Heart left ventricle (tissue), 16 donors: ENCODE measurements at regions of chr4 and their contacts with region 1.

Region 1: DNA sequence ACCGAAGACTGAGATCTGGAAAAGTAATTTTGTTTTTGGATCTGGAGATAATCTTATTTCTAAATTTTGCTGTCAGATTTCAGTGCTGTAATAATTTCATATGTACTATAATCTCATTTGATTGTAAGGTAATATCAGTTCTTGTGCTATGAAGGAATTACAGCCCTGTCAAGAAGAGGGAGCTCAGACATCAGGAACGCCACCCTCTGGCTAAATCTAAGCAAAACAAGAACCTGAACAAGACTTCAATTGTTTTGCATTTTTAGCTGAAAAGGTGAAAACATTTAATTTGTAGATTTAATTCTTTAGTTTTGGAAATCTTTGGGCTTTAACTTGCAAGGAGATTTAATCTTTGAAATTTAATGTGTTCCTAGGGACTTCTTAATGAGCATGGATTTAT is 525.4 kb upstream of the HS3ST1 start:
- DNase-seq: no peak
- ATAC-seq: no peak
- H3K4me3 ChIP-seq: no peak overlapping the region
- H3K27ac ChIP-seq: no peak overlapping the region
- H3K4me1 ChIP-seq: no peaks in the 10 kb centered on the region
- H3K27me3 ChIP-seq: no peaks in the 10 kb centered on the region
- CTCF ChIP-seq: peak in 10 of 12 donors; percentile 23 to 61 (median 46)
- POLR2A ChIP-seq: no peak

Region 2: GRCh38 chr4:11805842-11806241 is 148.3 kb before region 1 on chr4:
- intact Hi-C with region 1: loop called in 7 of 10 experiments (anchors 5 to 10 kb)
- DNase-seq: no peak
- ATAC-seq: peak; percentile 55 to 83 (median 80)
- H3K4me3 ChIP-seq: no peak overlapping the region
- H3K27ac ChIP-seq: no peak overlapping the region
- H3K4me1 ChIP-seq: no peaks in the 10 kb centered on the region
- H3K27me3 ChIP-seq: no peaks in the 10 kb centered on the region
- CTCF ChIP-seq: peak; percentile 38 to 64 (median 56)
- POLR2A ChIP-seq: no peak

Region 3: GRCh38 chr4:11814758-11815157 is 139.3 kb before region 1 on chr4:
- intact Hi-C with region 1: loop called in 7 of 10 experiments (anchors 5 to 10 kb)
- DNase-seq: no peak
- ATAC-seq: no peak
- H3K4me3 ChIP-seq: no peak overlapping the region
- H3K27ac ChIP-seq: no peak overlapping the region
- H3K4me1 ChIP-seq: no peaks in the 10 kb centered on the region
- H3K27me3 ChIP-seq: no peaks in the 10 kb centered on the region
- CTCF ChIP-seq: no peak
- POLR2A ChIP-seq: no peak